ENCODE measurements at regions of chr3 and their contacts with region 1.

Region 1: DNA sequence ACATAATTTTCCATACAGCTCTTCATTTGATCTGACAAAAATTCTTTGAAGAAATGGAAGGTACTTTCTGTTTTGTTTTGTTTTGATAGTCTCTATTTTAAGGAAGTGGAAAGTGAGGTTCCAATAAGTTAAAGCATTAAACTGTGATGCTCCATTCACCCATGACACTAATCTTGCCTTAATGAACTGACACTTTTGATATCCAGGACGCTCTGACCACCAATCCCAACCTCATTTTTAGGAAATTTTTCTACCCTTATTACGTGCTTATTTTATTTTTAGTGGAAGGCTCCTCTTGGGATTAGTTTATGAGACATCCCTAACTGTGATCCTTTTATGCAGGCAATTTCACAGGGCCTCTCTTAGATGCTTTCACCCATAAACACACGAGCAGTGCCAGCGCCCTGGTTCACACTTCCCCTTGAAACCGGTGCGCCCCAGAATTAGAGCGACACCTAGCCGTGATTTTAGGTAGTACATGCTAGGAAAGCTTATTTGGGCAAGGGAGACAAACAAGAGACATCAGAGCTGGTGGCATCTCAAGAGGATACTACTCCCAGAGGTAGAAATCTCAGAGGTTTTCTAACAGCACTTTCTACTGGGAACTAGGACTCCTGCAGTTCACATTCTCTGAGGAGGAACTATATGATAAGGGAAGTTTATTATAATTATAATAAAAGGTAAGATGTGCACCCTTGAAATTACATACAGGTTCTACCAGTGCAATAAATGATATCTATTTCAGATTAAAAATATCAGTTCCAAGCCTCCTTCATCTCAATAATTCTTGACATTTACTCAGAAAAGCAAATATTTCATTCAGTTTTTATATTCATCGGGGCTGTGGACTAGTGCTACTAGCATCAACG is 173.9 kb downstream of the SLC9A9 start:
- DNase-seq: peak; percentile 42 to 70 (median 57)
- H3K4me3 ChIP-seq: no peak overlapping the region
- H3K4me3 Mint-ChIP-seq: peak overlapping the region in 3 of 7 donors; percentile 10 to 57 (median 28)
- H3K27ac ChIP-seq: no peak overlapping the region
- H3K27ac Mint-ChIP-seq: peak overlapping the region in 4 of 8 donors; percentile 5 to 44 (median 18)
- H3K4me1 ChIP-seq: no peaks in the 10 kb centered on the region
- H3K4me1 Mint-ChIP-seq: peaks cover 4 to 9% (median 5%) of the 10 kb centered on the region in 3 donors
- H3K27me3 ChIP-seq: no peaks in the 10 kb centered on the region
- H3K27me3 Mint-ChIP-seq: no peaks in the 10 kb centered on the region

Region 2: GRCh38 chr3:143480344-143480743 is 194.0 kb before region 1 on chr3:
- CTCF ChIA-PET with region 1: no interaction called
- POLR2A ChIA-PET with region 1: no interaction called
- DNase-seq: no peak
- H3K4me3 ChIP-seq: no peak overlapping the region
- H3K4me3 Mint-ChIP-seq: no peak overlapping the region
- H3K27ac ChIP-seq: no peak overlapping the region
- H3K27ac Mint-ChIP-seq: no peak overlapping the region
- H3K4me1 ChIP-seq: no peaks in the 10 kb centered on the region
- H3K4me1 Mint-ChIP-seq: no peaks in the 10 kb centered on the region
- H3K27me3 ChIP-seq: no peaks in the 10 kb centered on the region
- H3K27me3 Mint-ChIP-seq: no peaks in the 10 kb centered on the region

Region 3: DNA sequence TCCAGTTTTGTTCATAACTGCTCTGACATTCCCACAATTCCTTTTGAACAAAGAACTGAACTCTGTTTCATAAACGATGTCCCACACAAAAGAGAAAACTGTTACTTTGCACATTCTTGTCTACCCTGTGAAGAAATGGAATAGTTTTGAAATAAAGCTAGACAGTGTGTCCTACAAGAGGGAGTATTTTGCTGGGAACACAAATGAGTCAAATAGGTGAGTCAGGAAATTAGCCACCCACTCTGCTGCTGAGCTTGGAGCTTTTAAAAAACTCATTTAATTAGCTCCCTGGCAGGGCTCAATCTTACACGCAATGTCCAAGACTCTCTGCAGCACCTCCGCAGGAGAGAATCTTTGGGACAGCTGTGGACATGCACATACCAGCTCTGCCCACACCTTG is 19.4 kb before region 1 on chr3:
- CTCF ChIA-PET with region 1: interaction called, 10 read pairs
- POLR2A ChIA-PET with region 1: no interaction called
- DNase-seq: no peak
- H3K4me3 ChIP-seq: no peak overlapping the region
- H3K4me3 Mint-ChIP-seq: no peak overlapping the region
- H3K27ac ChIP-seq: no peak overlapping the region
- H3K27ac Mint-ChIP-seq: no peak overlapping the region
- H3K4me1 ChIP-seq: no peaks in the 10 kb centered on the region
- H3K4me1 Mint-ChIP-seq: no peaks in the 10 kb centered on the region
- H3K27me3 ChIP-seq: no peaks in the 10 kb centered on the region
- H3K27me3 Mint-ChIP-seq: no peaks in the 10 kb centered on the region

Region 4: GRCh38 chr3:143685491-143685890 is 11.2 kb after region 1 on chr3:
- CTCF ChIA-PET with region 1: interaction called, 13 read pairs
- POLR2A ChIA-PET with region 1: interaction called, 3 read pairs
- DNase-seq: no peak
- H3K4me3 ChIP-seq: no peak overlapping the region
- H3K4me3 Mint-ChIP-seq: no peak overlapping the region
- H3K27ac ChIP-seq: no peak overlapping the region
- H3K27ac Mint-ChIP-seq: no peak overlapping the region
- H3K4me1 ChIP-seq: no peaks in the 10 kb centered on the region
- H3K4me1 Mint-ChIP-seq: no peaks in the 10 kb centered on the region
- H3K27me3 ChIP-seq: no peaks in the 10 kb centered on the region
- H3K27me3 Mint-ChIP-seq: no peaks in the 10 kb centered on the region

Measured in CD8-positive, alpha-beta memory T cell (primary cell).